AG04449 (cell line): ENCODE measurements at regions of chr4 and their contacts with region 1.

Region 1: GRCh38 chr4:1899149-1900086 is 28.2 kb downstream of the NSD2 start:
- DNase-seq: no peak
- H3K4me3 ChIP-seq: no peak overlapping the region
- CTCF ChIP-seq: peak; percentile 74

Region 2: DNA sequence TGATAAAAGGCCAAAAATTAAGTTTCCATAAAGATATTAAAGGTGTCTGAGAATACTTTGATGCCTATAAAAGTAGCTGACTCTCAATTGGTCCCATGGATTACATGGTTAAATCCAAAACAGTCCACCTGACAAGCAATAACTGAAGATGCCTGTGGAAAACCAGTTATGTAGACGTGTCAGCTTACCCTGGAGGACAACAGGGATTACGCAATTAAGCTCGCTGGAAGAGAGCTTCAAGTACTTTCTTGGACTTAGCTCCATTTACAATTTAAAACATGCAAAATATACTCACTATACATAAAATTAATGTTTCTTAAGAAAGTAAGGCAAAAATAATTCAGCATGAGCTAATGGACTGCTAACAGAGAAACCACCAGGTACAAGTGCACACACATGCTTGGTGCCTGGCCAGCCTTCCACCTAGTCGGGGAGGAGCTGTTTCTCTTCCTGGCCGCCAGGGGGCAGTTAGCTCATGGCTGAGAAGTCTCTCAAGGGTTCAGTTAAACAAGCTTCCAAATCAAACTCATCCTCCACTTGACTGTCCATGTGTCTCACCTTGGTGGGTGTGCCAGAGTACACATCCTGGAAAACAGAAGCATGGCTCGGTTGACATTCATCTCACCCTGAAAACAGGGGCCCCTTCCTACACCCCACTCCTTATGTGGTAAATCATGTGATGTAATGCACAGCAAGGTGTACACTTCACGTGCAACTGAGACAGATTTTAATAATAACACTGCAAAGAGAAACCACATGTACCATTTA is 206.1 kb before region 1 on chr4:
- CTCF ChIA-PET with region 1: interaction called, 12 read pairs
- POLR2A ChIA-PET with region 1: no interaction called
- DNase-seq: no peak
- H3K4me3 ChIP-seq: no peak overlapping the region
- CTCF ChIP-seq: peak; percentile 93

Region 3: DNA sequence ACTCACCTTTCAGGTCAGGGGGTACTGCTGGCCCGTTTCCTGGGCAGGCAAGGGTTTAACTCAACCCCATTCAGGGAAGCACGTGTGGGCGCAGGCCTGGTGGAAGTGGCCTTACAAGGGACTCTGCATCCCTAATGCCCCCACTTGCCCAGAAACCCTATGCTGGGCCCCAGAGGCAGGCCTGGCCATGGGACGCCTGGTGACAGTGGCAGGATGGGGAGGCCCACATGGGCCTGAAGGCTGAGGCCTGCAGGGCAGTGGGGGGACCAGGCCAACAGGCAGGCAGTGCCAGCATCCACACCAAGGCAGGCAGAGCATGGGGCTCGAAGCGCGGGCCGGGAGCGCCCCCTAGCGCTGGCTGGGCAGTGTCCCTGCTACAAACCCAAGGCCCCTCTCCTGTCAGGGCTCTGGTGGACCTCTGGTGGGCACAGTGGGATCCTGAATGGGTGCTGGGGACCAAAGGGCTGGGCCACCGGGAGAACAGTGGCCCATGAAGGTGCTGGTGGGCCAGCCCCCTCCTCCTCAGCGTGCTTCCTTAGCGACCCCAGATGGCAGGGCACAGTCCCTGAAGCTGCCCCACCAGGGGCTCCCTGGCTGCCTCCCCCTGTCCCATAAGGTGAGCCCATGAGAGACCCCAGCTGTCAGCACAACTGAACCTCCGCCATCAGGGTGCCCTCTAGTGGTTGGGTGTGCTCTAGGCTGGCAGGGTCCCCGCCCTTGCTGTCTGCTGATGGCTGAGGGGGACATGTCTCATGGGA is 89.5 kb before region 1 on chr4:
- CTCF ChIA-PET with region 1: interaction called, 99 read pairs
- POLR2A ChIA-PET with region 1: interaction called, 3 read pairs
- DNase-seq: no peak
- H3K4me3 ChIP-seq: no peak overlapping the region
- CTCF ChIP-seq: peak; percentile 97

Region 4: GRCh38 chr4:1833307-1834046 is 65.9 kb before region 1 on chr4:
- CTCF ChIA-PET with region 1: interaction called, 23 read pairs
- POLR2A ChIA-PET with region 1: no interaction called
- DNase-seq: no peak
- H3K4me3 ChIP-seq: no peak overlapping the region
- CTCF ChIP-seq: no peak

Region 5: GRCh38 chr4:1856042-1856788 is 43.2 kb before region 1 on chr4 and contains the start of gene LETM1:
- CTCF ChIA-PET with region 1: interaction called, 76 read pairs
- POLR2A ChIA-PET with region 1: no interaction called
- DNase-seq: peak; percentile 67
- H3K4me3 ChIP-seq: peak within 1 kb of the TSS; percentile 85
- CTCF ChIP-seq: peak; percentile 5

Region 6: DNA sequence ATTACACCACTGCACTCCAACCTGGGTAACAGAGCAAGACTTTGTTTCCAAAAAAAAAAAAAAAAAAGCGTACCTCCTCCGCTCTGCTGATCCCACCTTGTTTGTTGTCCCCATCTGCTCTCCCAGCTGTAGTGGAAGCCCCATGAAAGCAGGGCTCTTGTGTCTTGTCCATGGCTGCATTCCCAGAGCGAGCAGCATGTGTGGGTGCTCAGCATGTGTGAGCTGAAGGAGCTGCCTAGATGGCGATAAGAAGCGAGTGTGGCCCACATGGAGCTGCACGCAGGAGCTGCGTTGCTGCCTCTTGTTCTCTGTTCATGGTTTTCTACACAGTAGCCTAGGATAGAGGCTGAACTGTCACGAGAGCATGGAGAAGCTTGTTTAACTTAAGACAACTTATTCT is 15.8 kb before region 1 on chr4:
- CTCF ChIA-PET with region 1: interaction called, 196 read pairs
- POLR2A ChIA-PET with region 1: no interaction called
- DNase-seq: no peak
- H3K4me3 ChIP-seq: no peak overlapping the region
- CTCF ChIP-seq: no peak

Region 7: DNA sequence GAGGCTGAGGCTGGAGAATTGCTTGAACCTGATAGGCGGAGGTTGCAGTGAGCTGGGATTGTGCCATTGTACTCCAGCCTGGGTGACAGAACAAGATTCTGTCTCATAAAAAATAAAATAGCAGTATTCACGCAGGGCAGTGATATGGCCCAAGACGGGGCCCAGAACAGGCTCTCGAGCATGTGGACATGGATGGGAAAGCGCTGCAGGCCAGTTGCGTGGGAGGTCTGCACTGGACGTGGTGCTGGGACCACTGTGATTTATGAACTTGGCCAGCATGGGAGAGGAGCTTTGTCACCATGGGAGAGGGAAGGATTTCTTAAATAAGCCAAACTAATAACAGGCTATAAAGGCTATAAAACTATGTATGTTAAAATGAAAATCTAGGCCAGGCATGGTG is 23.4 kb after region 1 on chr4:
- CTCF ChIA-PET with region 1: interaction called, 78 read pairs
- POLR2A ChIA-PET with region 1: no interaction called
- DNase-seq: no peak
- H3K4me3 ChIP-seq: no peak overlapping the region
- CTCF ChIP-seq: no peak

Region 8: DNA sequence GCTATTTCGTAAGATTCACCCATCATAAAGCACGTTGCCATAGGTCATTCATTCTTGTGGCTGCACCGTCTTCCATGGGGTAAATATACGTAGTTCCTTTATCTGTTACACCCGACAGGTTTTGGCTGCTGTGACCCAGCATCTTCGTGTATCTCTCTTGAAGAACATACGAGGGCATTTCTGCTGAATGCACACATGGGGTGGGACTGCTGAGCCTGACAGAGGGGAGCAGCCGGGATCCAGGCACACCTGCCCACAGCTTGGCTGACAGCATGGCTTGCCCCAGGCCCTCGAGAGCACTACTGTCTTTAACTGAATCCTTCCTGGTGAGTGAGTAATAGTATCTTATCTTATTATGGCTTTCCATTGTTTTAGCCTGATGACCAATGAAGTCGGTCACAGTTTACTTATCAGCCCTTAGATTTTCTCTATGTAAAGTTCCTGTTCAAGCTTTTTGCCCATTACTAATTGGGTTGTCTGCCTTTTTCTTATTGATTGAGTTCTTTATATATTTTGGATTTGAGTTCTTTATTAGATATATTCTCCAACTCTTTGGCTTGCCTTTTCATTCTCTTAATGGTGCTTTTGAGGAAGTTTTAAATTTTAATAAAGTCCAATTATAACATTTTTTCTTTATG is 407.5 kb after region 1 on chr4:
- CTCF ChIA-PET with region 1: no interaction called
- POLR2A ChIA-PET with region 1: no interaction called
- DNase-seq: no peak
- H3K4me3 ChIP-seq: no peak overlapping the region
- CTCF ChIP-seq: no peak